ENCODE measurements at regions of chr16 and their contacts with region 1.

Region 1: GRCh38 chr16:67672739-67673662 is 6.4 kb downstream of the C16orf86 start:
- DNase-seq: peak; percentile 84
- H3K4me3 ChIP-seq: no peak overlapping the region; a peak in 1 of 4 replicates
- H3K27ac ChIP-seq: peak overlapping the region; percentile 32 to 69; a peak in 3 of 4 replicates
- H3K4me1 ChIP-seq: peaks cover 15 to 31% of the 10 kb centered on the region in 2 experiments; a peak in 2 of 4 replicates
- H3K27me3 ChIP-seq: no peaks in the 10 kb centered on the region
- CTCF ChIP-seq: peak; percentile 76
- EP300 ChIP-seq: no peak
- RAD21 ChIP-seq: peak; percentile 82

Region 2: GRCh38 chr16:67637641-67638040 is 35.4 kb before region 1 on chr16:
- CTCF ChIA-PET with region 1: no interaction called
- POLR2A ChIA-PET with region 1: no interaction called
- DNase-seq: no peak
- H3K4me3 ChIP-seq: no peak overlapping the region
- H3K27ac ChIP-seq: no peak overlapping the region
- H3K4me1 ChIP-seq: no peaks in the 10 kb centered on the region; a peak in 1 of 4 replicates
- H3K27me3 ChIP-seq: no peaks in the 10 kb centered on the region
- CTCF ChIP-seq: no peak
- EP300 ChIP-seq: no peak
- RAD21 ChIP-seq: no peak

Region 3: GRCh38 chr16:67685388-67686112 is 12.5 kb after region 1 on chr16:
- CTCF ChIA-PET with region 1: interaction called, 23 read pairs
- POLR2A ChIA-PET with region 1: no interaction called
- DNase-seq: no peak
- H3K4me3 ChIP-seq: no peak overlapping the region
- H3K27ac ChIP-seq: no peak overlapping the region
- H3K4me1 ChIP-seq: no peaks in the 10 kb centered on the region
- H3K27me3 ChIP-seq: no peaks in the 10 kb centered on the region
- CTCF ChIP-seq: no peak
- EP300 ChIP-seq: no peak
- RAD21 ChIP-seq: no peak

Region 4: GRCh38 chr16:67806428-67807147 is 133.6 kb after region 1 on chr16 and contains the starts of genes RANBP10 and TSNAXIP1:
- CTCF ChIA-PET with region 1: interaction called, 23 read pairs
- POLR2A ChIA-PET with region 1: no interaction called
- DNase-seq: peak; percentile 97
- H3K4me3 ChIP-seq: peak within 1 kb of the TSS; percentile 78 to 83
- H3K27ac ChIP-seq: peak within 1 kb of the TSS; percentile 76 to 81
- H3K4me1 ChIP-seq: peaks cover 0 to 11% of the 10 kb centered on the region in 2 experiments; a peak in 1 of 4 replicates
- H3K27me3 ChIP-seq: no peaks in the 10 kb centered on the region
- CTCF ChIP-seq: no peak
- EP300 ChIP-seq: 0 out of 4 replicates have a peak, but pooled peaks of 1 of the 2 experiments have one; percentile 2
- RAD21 ChIP-seq: no peak
- polyA plus RNA-seq, gene RANBP10: 11.9 and 12.1 TPM in 2 replicates
- polyA plus RNA-seq, gene TSNAXIP1: 4.4 and 6.8 TPM in 2 replicates

Region 5: DNA sequence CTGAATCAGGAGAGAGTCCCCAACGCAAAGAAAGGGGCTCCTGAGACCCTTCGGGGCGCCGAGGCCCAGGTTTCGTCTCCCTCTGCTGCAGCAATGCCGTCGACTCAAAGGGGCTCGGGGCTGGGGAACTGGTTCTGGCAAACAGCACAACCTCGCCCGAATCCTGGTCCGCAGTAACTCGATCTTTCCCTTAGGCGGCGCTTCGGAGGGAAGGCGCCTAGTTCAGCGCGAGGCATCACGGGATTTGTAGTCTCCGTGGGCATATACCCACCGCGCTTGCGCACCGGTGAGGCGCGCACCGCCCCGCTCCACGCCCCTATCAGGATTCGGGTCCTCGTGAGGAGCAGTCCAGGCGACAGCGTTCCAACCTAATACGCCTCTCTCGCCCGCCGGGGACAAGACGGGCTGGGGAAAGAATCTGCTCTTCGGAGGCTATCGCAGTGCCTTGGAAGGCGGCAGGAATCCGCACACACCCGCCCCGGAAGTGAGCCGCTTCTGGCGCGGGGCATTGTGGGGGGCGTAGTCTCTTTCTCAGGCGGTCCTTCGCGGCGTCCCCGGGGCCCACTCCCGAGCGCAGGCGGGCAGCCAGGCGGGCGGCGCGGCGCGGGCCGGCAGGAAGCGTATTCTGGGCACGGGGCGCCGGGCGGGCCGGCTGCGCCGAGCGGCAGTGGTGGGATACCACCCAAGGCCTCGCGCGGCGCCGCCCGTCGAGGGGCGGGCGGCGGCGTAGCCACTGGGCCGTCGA is 168.9 kb after region 1 on chr16 and contains the start of gene THAP11:
- CTCF ChIA-PET with region 1: interaction called, 11 read pairs
- POLR2A ChIA-PET with region 1: no interaction called
- DNase-seq: peak; percentile 94
- H3K4me3 ChIP-seq: peak within 1 kb of the TSS; percentile 77 to 97
- H3K27ac ChIP-seq: peak within 1 kb of the TSS; percentile 98 to 99
- H3K4me1 ChIP-seq: peaks cover 26 to 36% of the 10 kb centered on the region in 2 experiments
- H3K27me3 ChIP-seq: no peaks in the 10 kb centered on the region
- CTCF ChIP-seq: peak; percentile 64
- EP300 ChIP-seq: no peak
- RAD21 ChIP-seq: peak; percentile 23
- polyA plus RNA-seq, gene THAP11: 32.3 and 34.8 TPM in 2 replicates

Measured in SK-N-SH (cell line).